ENCODE measurements at regions of chr18 and their contacts with region 1.

Region 1: GRCh38 chr18:56112013-56112749 is 524.2 kb upstream of the TCF4 start:
- DNase-seq: no peak
- ATAC-seq: peak; percentile 92
- H3K4me3 Mint-ChIP-seq: peak overlapping the region; percentile 64
- H3K27ac Mint-ChIP-seq: peak overlapping the region; percentile 72
- H3K4me1 Mint-ChIP-seq: peaks cover 50% of the 10 kb centered on the region
- H3K27me3 Mint-ChIP-seq: no peaks in the 10 kb centered on the region
- CTCF ChIP-seq: no peak

Region 2: DNA sequence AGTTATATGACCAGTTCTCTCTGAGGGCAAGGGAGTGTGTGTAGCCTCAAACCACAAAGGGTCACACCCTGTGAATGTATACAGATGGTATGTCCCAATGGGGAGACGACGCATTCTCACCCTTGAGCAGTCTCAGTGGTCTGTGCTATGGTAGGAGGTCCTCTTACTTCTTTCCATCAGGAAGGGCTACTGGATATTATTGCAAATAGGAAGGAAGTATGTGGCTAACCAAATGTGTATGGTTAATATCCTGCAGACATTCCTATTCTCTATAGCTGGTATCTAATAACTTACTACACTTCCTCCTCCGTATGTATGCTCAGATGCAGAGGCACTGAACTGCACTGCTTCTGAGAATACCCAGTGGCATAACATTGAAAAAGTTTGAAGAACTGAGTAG is 846.2 kb before region 1 on chr18:
- CTCF ChIA-PET with region 1: no interaction called
- POLR2A ChIA-PET with region 1: no interaction called
- intact Hi-C with region 1: loop called (anchors 10 kb)
- DNase-seq: no peak
- ATAC-seq: peak; percentile 38
- H3K4me3 Mint-ChIP-seq: peak overlapping the region; percentile 44
- H3K27ac Mint-ChIP-seq: peak overlapping the region; percentile 93
- H3K4me1 Mint-ChIP-seq: peaks cover 73% of the 10 kb centered on the region
- H3K27me3 Mint-ChIP-seq: no peaks in the 10 kb centered on the region
- CTCF ChIP-seq: no peak

Region 3: GRCh38 chr18:55605733-55606338 is 506.3 kb before region 1 on chr18:
- CTCF ChIA-PET with region 1: no interaction called
- POLR2A ChIA-PET with region 1: no interaction called
- intact Hi-C with region 1: loop called (anchors 5 kb)
- DNase-seq: no peak
- ATAC-seq: peak; percentile 92
- H3K4me3 Mint-ChIP-seq: peak overlapping the region; percentile 21
- H3K27ac Mint-ChIP-seq: peak overlapping the region; percentile 76
- H3K4me1 Mint-ChIP-seq: peaks cover 31% of the 10 kb centered on the region
- H3K27me3 Mint-ChIP-seq: no peaks in the 10 kb centered on the region
- CTCF ChIP-seq: no peak

Region 4: GRCh38 chr18:56085551-56085950 is 26.6 kb before region 1 on chr18:
- CTCF ChIA-PET with region 1: no interaction called
- POLR2A ChIA-PET with region 1: interaction called, 3 read pairs
- intact Hi-C with region 1: loop called (anchors 1 kb)
- DNase-seq: no peak
- ATAC-seq: no peak
- H3K4me3 Mint-ChIP-seq: no peak overlapping the region
- H3K27ac Mint-ChIP-seq: no peak overlapping the region
- H3K4me1 Mint-ChIP-seq: peaks cover 17% of the 10 kb centered on the region
- H3K27me3 Mint-ChIP-seq: no peaks in the 10 kb centered on the region
- CTCF ChIP-seq: no peak

Region 5: DNA sequence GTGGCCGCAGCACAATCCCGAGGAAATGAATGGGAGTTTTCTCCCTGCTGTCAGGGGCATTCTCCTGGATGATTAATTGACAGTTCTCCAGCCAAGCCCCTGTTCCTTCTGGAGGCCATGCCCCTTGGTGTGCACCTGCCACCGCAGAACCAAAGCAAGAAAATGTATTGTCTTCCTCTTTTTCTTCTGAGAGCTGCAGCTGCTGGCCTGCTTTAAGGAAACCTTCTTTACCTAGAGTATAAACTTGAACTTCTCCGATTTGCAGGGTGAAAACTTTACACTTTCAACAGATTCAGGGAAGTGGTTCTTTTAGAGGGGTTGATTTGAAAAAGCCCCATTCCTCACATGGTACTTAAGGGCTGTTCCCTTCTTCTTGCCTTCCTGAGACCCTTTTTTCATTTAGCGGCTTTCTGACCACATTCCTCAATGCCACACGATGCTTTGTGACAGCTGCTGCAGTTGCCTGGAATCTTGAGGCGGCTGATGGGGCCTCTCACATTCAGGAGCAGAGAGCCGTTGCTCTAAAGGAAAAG is 123.4 kb after region 1 on chr18:
- CTCF ChIA-PET with region 1: no interaction called
- POLR2A ChIA-PET with region 1: no interaction called
- intact Hi-C with region 1: loop called (anchors 2 kb)
- DNase-seq: peak; percentile 28
- ATAC-seq: peak; percentile 93
- H3K4me3 Mint-ChIP-seq: peak overlapping the region; percentile 52
- H3K27ac Mint-ChIP-seq: peak overlapping the region; percentile 86
- H3K4me1 Mint-ChIP-seq: peaks cover 39% of the 10 kb centered on the region
- H3K27me3 Mint-ChIP-seq: no peaks in the 10 kb centered on the region
- CTCF ChIP-seq: no peak

Region 6: GRCh38 chr18:56321470-56321869 is 209.3 kb after region 1 on chr18:
- CTCF ChIA-PET with region 1: no interaction called
- POLR2A ChIA-PET with region 1: no interaction called
- intact Hi-C with region 1: loop called (anchors 5 kb)
- DNase-seq: no peak
- ATAC-seq: no peak
- H3K4me3 Mint-ChIP-seq: no peak overlapping the region
- H3K27ac Mint-ChIP-seq: peak overlapping the region; percentile 20
- H3K4me1 Mint-ChIP-seq: peaks cover 47% of the 10 kb centered on the region
- H3K27me3 Mint-ChIP-seq: no peaks in the 10 kb centered on the region
- CTCF ChIP-seq: no peak